B cell (primary cell): ENCODE measurements at regions of chr4 and their contacts with region 1.

Region 1: DNA sequence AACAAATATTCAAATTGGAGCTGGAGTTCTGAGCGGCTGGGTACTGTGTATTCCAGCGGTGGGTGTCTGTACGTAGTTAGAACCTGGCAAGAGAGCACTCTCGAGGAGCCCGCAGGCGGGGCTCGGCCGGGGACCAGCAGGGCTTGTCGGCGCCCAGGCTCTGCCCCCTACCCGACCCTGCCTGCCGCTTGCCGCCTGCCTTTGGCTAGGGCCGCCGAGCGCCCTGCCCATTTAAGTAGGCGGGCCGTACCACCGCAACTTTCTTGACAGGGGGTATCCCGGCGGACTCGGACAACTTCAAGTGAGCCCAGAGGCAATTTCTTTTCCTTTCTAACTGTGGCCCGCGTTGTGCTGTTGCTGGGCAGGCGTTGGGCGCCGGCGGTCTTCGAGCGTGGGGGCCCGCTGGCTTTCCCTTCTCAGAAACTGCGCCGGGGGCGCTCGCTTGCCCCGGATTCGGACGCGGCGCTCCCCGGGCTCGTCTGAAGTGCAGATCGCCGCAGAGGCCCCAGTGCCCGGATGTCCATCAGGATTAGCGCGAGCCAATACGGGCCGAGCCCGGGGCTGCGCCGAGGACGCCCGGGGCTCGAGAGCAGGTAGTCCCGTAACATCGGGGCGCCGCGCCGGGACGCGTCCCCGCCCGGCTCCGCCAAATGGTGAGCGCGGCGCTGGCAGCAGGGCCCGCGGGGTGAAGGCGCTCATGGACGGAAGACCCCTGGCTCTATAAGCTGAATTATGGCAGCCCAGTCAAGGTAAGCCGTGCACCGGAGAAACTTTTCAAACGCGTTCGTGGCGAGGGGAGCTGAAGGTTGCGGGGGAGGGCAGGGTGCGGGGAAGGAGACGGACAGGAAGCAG is 72.1 kb downstream of the AFF1 start:
- DNase-seq: peak; percentile 97
- ATAC-seq: peak; percentile 85
- H3K4me3 ChIP-seq: peak overlapping the region; percentile 67 to 100 (median 89)
- H3K4me3 Mint-ChIP-seq: peak overlapping the region; percentile 99
- H3K27ac ChIP-seq: peak overlapping the region; percentile 88 to 92
- H3K27ac Mint-ChIP-seq: peak overlapping the region; percentile 95
- H3K4me1 ChIP-seq: peaks cover 40 to 46% of the 10 kb centered on the region in 2 donors
- H3K4me1 Mint-ChIP-seq: peaks cover 54% of the 10 kb centered on the region
- H3K27me3 ChIP-seq: no peaks in the 10 kb centered on the region
- H3K27me3 Mint-ChIP-seq: no peaks in the 10 kb centered on the region
- CTCF ChIP-seq: peak; percentile 8

Region 2: DNA sequence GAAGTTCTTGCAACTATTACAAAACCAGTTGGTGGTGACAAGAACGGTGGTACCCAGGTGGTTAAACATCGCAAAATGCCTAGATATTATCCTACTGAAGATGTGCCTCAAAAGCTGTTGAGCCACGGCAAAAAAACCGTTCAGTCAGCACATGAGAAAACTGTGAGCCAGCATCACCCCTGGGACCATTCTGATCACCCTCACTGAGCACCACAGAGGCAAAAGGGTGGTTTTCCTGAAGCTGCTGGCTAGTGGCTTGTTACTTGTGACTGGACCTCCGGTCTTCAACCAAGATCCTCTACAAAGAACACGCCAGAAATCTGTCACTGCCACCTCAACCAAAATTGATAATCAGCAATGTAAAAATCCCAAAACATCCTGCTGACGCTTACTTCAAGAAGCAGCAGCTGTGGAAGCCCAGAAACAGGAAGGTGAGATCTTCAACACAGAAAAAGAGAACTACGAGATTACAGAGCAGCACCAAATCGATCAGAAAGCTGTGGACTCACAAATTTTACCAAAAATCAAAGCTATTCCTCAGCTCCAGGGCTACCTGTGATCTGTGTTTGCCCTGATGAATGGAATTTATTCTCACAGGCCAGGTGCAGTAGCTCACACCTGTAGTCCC is 136.3 kb before region 1 on chr4:
- CTCF ChIA-PET with region 1: no interaction called
- POLR2A ChIA-PET with region 1: no interaction called
- intact Hi-C with region 1: no loop called
- DNase-seq: peak; percentile 12
- ATAC-seq: no peak
- H3K4me3 ChIP-seq: no peak overlapping the region
- H3K4me3 Mint-ChIP-seq: peak overlapping the region; percentile 67
- H3K27ac ChIP-seq: no peak overlapping the region
- H3K27ac Mint-ChIP-seq: no peak overlapping the region
- H3K4me1 ChIP-seq: peaks cover 4 to 10% of the 10 kb centered on the region in 2 donors
- H3K4me1 Mint-ChIP-seq: peaks cover 6% of the 10 kb centered on the region
- H3K27me3 ChIP-seq: no peaks in the 10 kb centered on the region
- H3K27me3 Mint-ChIP-seq: no peaks in the 10 kb centered on the region
- CTCF ChIP-seq: no peak

Region 3: GRCh38 chr4:86927843-86928395 is 79.0 kb before region 1 on chr4:
- CTCF ChIA-PET with region 1: interaction called, 93 read pairs
- POLR2A ChIA-PET with region 1: interaction called, 4 read pairs
- intact Hi-C with region 1: no loop called
- DNase-seq: no peak
- ATAC-seq: no peak
- H3K4me3 ChIP-seq: no peak overlapping the region
- H3K4me3 Mint-ChIP-seq: no peak overlapping the region
- H3K27ac ChIP-seq: no peak overlapping the region
- H3K27ac Mint-ChIP-seq: no peak overlapping the region
- H3K4me1 ChIP-seq: peaks cover 10 to 13% of the 10 kb centered on the region in 2 donors
- H3K4me1 Mint-ChIP-seq: peaks cover 14% of the 10 kb centered on the region
- H3K27me3 ChIP-seq: no peaks in the 10 kb centered on the region
- H3K27me3 Mint-ChIP-seq: no peaks in the 10 kb centered on the region
- CTCF ChIP-seq: no peak

Region 4: DNA sequence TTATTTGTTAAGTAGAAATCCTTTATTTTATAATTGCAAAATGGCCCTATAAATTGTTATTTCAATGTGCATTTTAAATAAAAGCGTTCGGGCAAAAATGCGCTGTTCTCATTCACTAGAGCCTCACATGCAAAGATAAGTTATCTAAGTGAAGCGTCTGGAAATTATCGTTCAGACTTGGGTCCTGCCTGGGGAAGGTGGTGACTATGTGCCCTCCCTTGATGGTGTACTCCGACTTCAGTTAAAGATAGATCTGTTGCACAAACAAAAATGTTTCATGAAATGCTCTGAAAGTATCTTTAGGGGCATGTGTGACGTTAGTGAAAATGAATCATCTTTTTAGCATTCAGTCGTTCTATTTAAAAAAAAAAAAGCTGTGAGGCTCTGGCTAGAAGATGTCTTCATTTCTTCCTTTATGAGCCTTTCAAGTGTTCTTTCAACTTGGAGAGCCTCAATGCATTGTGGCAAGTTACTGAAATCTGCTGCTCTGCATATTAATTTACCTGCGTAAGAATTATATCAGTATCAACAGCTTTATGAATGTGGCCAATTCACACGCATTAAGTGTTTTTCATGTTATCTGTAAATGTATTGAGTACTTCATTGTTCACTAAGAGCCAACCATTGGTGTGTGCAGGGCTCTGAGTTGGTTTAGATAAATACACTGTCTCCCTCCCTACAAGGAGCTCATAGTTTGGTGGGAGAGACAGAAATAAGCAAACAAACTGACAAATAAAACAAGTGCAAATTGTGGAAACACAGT is 10.9 kb after region 1 on chr4:
- CTCF ChIA-PET with region 1: interaction called, 10 read pairs
- POLR2A ChIA-PET with region 1: interaction called, 10 read pairs
- intact Hi-C with region 1: loop called (anchors 1 kb)
- DNase-seq: no peak
- ATAC-seq: no peak
- H3K4me3 ChIP-seq: no peak overlapping the region
- H3K4me3 Mint-ChIP-seq: peak overlapping the region; percentile 25
- H3K27ac ChIP-seq: peak overlapping the region; percentile 14 to 79
- H3K27ac Mint-ChIP-seq: peak overlapping the region; percentile 64
- H3K4me1 ChIP-seq: peaks cover 44 to 81% of the 10 kb centered on the region in 2 donors
- H3K4me1 Mint-ChIP-seq: peaks cover 80% of the 10 kb centered on the region
- H3K27me3 ChIP-seq: no peaks in the 10 kb centered on the region
- H3K27me3 Mint-ChIP-seq: no peaks in the 10 kb centered on the region
- CTCF ChIP-seq: no peak

Region 5: DNA sequence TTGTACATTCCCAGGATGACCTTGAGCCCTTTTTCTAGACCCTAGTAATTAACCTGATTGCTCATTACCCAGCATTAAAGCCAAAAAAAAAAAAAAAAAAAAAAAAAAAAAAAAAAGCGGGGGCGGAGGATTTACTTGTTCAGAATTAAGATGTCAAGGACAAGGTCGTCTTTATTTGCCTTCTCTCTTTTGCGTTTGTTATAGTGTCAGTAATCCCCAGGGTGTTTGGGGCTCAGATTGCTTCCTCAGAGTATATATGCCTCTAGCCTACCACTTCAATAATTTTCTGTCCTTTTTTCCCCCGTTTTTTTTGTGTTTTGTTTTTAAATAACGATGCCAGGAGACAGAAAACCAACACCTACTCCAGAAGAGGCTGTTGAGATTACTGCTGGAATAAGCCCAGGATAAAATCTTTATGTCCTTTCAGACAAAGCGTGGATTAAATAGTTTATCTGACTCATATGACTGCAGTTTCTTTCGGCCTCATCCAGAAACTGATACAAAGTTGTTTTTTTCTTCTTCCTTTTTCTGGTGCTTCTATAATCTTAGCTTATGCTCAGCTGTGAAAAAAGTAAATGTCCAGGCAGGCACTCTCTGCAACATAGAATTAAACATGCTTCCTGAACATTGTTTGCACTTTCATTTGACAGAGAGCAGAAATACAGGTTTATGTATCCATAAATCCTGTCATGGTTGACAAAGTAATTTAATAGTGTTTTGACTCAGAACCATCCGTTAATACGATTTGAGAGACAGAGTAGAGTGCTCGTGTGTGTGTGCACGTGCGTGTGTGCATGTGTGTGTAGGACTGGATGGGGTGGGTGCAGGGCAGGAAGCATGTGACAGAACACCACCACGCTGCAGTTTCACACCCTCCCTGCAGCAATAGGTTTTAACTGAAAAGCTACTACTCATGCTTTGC is 66.6 kb after region 1 on chr4:
- CTCF ChIA-PET with region 1: interaction called, 5 read pairs
- POLR2A ChIA-PET with region 1: interaction called, 4 read pairs
- intact Hi-C with region 1: loop called (anchors 1 kb)
- DNase-seq: peak; percentile 79
- ATAC-seq: peak; percentile 86
- H3K4me3 ChIP-seq: peak overlapping the region; percentile 23 to 64 (median 45)
- H3K4me3 Mint-ChIP-seq: peak overlapping the region; percentile 84
- H3K27ac ChIP-seq: peak overlapping the region; percentile 65 to 83
- H3K27ac Mint-ChIP-seq: peak overlapping the region; percentile 76
- H3K4me1 ChIP-seq: peaks cover 10 to 22% of the 10 kb centered on the region in 2 donors
- H3K4me1 Mint-ChIP-seq: peaks cover 37% of the 10 kb centered on the region
- H3K27me3 ChIP-seq: no peaks in the 10 kb centered on the region
- H3K27me3 Mint-ChIP-seq: no peaks in the 10 kb centered on the region
- CTCF ChIP-seq: no peak

Region 6: GRCh38 chr4:87220094-87220822 is 213.4 kb after region 1 on chr4 and contains the start of gene KLHL8:
- CTCF ChIA-PET with region 1: no interaction called
- POLR2A ChIA-PET with region 1: no interaction called
- intact Hi-C with region 1: loop called (anchors 5 kb)
- DNase-seq: peak; percentile 92
- ATAC-seq: peak; percentile 93
- H3K4me3 ChIP-seq: peak within 1 kb of the TSS; percentile 76 to 100 (median 93)
- H3K4me3 Mint-ChIP-seq: peak within 1 kb of the TSS; percentile 98
- H3K27ac ChIP-seq: peak within 1 kb of the TSS; percentile 80 to 85
- H3K27ac Mint-ChIP-seq: peak within 1 kb of the TSS; percentile 96
- H3K4me1 ChIP-seq: peaks cover 7% of the 10 kb centered on the region in 2 donors
- H3K4me1 Mint-ChIP-seq: peaks cover 16% of the 10 kb centered on the region
- H3K27me3 ChIP-seq: no peaks in the 10 kb centered on the region
- H3K27me3 Mint-ChIP-seq: no peaks in the 10 kb centered on the region
- CTCF ChIP-seq: no peak
- total RNA-seq, gene KLHL8: 12.4 and 14.3 TPM in 2 replicates